ENCODE measurements at regions of chr2 and their contacts with region 1.

Region 1: GRCh38 chr2:7427293-7428060 is 510.3 kb downstream of the RNF144A start:
- DNase-seq: no peak
- ATAC-seq: peak in 3 of 4 donors; percentile 37 to 54 (median 44)
- H3K4me3 ChIP-seq: no peak overlapping the region
- H3K27ac ChIP-seq: no peak overlapping the region
- H3K4me1 ChIP-seq: peaks cover 0 to 36% (median 5%) of the 10 kb centered on the region in 12 donors
- H3K27me3 ChIP-seq: peaks cover 0 to 26% (median 9%) of the 10 kb centered on the region in 9 donors
- CTCF ChIP-seq: peak; percentile 64 to 83 (median 74)
- POLR2A ChIP-seq: no peak

Region 2: GRCh38 chr2:7097348-7097895 is 330.1 kb before region 1 on chr2:
- intact Hi-C with region 1: loop called in 1 of 10 experiments (anchors 10 kb)
- DNase-seq: peak; percentile 58 to 86 (median 68)
- ATAC-seq: peak; percentile 70 to 92 (median 90)
- H3K4me3 ChIP-seq: peak overlapping the region in 4 of 12 donors; percentile 8 to 38 (median 26)
- H3K27ac ChIP-seq: no peak overlapping the region
- H3K4me1 ChIP-seq: peaks cover 0 to 8% (median 1%) of the 10 kb centered on the region in 12 donors
- H3K27me3 ChIP-seq: no peaks in the 10 kb centered on the region
- CTCF ChIP-seq: peak; percentile 95 to 99 (median 98)
- POLR2A ChIP-seq: no peak

Region 3: GRCh38 chr2:7604456-7604855 is 177.0 kb after region 1 on chr2:
- intact Hi-C with region 1: no loop called
- DNase-seq: no peak
- ATAC-seq: no peak
- H3K4me3 ChIP-seq: no peak overlapping the region
- H3K27ac ChIP-seq: no peak overlapping the region
- H3K4me1 ChIP-seq: no peaks in the 10 kb centered on the region
- H3K27me3 ChIP-seq: peaks cover 0 to 8% (median 0%) of the 10 kb centered on the region in 9 donors
- CTCF ChIP-seq: no peak
- POLR2A ChIP-seq: no peak

Region 4: GRCh38 chr2:7665880-7666279 is 238.4 kb after region 1 on chr2:
- intact Hi-C with region 1: loop called in 1 of 10 experiments (anchors 5 kb)
- DNase-seq: no peak
- ATAC-seq: no peak
- H3K4me3 ChIP-seq: no peak overlapping the region
- H3K27ac ChIP-seq: no peak overlapping the region
- H3K4me1 ChIP-seq: peaks cover 0 to 3% (median 0%) of the 10 kb centered on the region in 12 donors
- H3K27me3 ChIP-seq: no peaks in the 10 kb centered on the region
- CTCF ChIP-seq: no peak
- POLR2A ChIP-seq: no peak

Region 5: GRCh38 chr2:8303322-8303832 is 875.9 kb after region 1 on chr2:
- intact Hi-C with region 1: loop called in 1 of 10 experiments (anchors 10 kb)
- DNase-seq: peak; percentile 61 to 85 (median 73)
- ATAC-seq: peak; percentile 45 to 67 (median 64)
- H3K4me3 ChIP-seq: no peak overlapping the region
- H3K27ac ChIP-seq: peak overlapping the region in 2 of 12 donors; percentile 54 to 87
- H3K4me1 ChIP-seq: peaks cover 0 to 77% (median 0%) of the 10 kb centered on the region in 12 donors
- H3K27me3 ChIP-seq: no peaks in the 10 kb centered on the region
- CTCF ChIP-seq: peak in 1 of 12 donors; percentile 34
- POLR2A ChIP-seq: no peak

Region 6: DNA sequence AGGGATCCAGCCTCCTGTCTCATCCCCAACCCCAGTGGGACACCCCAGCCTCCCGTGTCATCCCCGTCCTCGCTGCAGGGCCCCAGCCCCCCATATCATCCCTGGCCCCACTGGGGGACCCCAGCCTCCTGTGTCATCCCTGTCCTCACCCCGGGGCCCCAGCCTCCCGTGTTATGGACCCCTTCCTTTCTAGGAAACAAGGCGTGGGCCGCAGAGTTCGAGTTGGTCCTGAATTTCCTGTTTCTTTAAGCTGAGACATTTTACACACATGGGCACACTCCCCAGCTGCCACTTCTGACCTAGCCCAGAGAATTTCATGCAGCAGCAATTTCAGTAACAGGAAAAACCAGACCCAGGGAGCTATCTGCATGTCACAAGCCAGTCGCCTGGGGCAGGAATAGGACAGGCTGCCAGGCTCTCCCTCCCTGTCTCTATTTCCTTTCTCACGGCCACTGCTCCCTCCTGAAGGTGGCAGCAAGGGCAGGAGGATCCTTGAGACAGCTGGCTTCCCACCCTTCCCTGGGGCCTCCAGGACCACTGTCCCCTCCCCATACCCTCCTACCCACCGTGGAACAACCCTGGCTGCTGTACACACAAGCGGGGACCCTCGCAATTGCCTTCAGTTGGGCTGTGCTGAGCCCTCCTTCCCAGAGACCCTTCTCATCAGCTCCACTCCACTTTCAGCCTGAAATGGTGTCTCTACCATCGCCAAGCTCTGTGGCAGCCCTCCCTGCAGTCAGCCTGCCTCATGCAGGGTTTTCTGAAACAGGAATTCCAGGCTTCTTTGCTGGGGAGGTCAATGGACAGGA is 1112.5 kb after region 1 on chr2:
- intact Hi-C with region 1: loop called in 2 of 10 experiments (anchors 10 kb)
- DNase-seq: peak in 3 of 5 donors; percentile 42 to 65 (median 63)
- ATAC-seq: peak in 3 of 4 donors; percentile 45 to 60 (median 52)
- H3K4me3 ChIP-seq: no peak overlapping the region
- H3K27ac ChIP-seq: peak overlapping the region in 7 of 12 donors; percentile 17 to 87 (median 55)
- H3K4me1 ChIP-seq: peaks cover 0 to 100% (median 45%) of the 10 kb centered on the region in 12 donors
- H3K27me3 ChIP-seq: no peaks in the 10 kb centered on the region
- CTCF ChIP-seq: peak in 1 of 12 donors; percentile 21
- POLR2A ChIP-seq: no peak

Region 7: DNA sequence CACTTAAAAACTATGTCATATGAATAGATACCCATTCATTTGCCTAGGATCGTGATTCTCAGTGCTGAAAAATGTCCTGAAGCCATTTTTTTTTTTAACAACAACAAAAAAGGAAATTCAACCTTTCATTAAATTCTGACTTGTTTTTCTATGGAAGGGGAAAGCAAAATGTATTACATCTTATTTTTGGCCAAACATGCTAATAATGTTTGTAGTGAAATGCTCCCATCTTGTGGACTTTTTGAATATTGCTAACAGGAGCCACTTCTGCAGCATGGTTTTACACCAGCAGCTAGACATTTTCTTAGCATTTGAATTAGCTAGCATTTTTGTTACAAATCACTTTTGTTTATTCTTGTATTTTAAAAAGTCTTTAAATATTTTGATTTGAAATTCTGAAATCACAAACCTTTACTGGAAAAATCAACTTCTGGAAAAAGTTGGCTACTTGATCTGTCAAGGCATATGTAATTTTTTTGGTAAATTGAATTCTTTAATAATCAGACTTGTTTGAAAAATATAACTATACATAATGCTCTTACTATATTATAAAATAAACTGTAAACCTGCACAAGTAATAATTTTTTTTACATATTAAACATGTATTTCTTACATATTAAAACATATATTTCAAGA is 1334.2 kb after region 1 on chr2:
- intact Hi-C with region 1: loop called in 2 of 10 experiments (anchors 10 kb)
- DNase-seq: no peak
- ATAC-seq: no peak
- H3K4me3 ChIP-seq: no peak overlapping the region
- H3K27ac ChIP-seq: no peak overlapping the region
- H3K4me1 ChIP-seq: peaks cover 0 to 5% (median 0%) of the 10 kb centered on the region in 12 donors
- H3K27me3 ChIP-seq: no peaks in the 10 kb centered on the region
- CTCF ChIP-seq: peak; percentile 11 to 65 (median 48)
- POLR2A ChIP-seq: no peak